HEK293 (cell line): ENCODE measurements at regions of chr14 and their contacts with region 1.

Region 1: DNA sequence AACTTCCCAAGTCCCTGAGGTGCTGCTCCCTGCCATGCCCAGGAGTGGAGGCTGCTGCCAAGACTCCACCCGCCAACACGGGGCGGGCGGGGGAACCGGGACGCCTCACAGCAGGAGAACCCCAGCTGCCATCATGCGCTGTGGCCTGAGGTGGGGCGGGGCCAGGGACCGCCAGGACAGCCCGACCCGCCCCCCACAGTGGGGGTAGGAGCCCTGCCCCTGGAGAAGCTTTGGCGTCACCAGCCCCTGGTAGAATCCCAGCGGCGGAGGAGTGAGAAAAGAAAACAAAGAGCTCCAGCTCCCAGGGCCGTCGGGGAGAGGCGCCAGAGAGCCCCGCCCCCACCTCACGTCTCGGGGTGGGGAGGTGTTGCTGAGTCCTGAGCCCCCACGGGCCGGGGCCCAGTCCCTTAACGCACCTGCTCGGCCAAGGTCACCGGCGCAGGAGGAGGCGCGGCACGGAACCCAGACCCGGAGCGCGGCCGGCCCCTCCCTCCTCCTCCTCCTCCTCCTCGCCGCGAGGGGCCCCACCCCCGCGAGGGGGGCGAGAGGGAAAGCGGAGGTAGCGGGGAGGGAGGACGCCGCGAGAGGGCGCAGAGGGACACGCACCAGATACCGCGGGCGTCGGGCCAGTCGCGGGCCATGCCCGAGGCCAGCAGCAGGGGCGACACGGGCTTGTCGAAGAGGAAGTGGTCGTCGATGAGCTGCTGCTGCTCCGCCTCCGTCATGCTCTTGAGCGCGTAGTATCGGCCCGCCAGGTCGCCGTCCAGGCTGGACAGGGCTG is 1.8 kb downstream of the CKB start:
- H3K4me3 ChIP-seq: peak overlapping the region; percentile 82
- H3K27ac ChIP-seq: peak overlapping the region; percentile 99
- H3K4me1 ChIP-seq: peaks cover 21% of the 10 kb centered on the region
- CTCF ChIP-seq: peak; percentile 100

Region 2: GRCh38 chr14:103500148-103500990 is 20.5 kb before region 1 on chr14:
- CTCF ChIA-PET with region 1: interaction called, 15 read pairs
- POLR2A ChIA-PET with region 1: no interaction called
- H3K4me3 ChIP-seq: no peak overlapping the region
- H3K27ac ChIP-seq: no peak overlapping the region
- H3K4me1 ChIP-seq: no peaks in the 10 kb centered on the region
- CTCF ChIP-seq: peak; percentile 81

Region 3: DNA sequence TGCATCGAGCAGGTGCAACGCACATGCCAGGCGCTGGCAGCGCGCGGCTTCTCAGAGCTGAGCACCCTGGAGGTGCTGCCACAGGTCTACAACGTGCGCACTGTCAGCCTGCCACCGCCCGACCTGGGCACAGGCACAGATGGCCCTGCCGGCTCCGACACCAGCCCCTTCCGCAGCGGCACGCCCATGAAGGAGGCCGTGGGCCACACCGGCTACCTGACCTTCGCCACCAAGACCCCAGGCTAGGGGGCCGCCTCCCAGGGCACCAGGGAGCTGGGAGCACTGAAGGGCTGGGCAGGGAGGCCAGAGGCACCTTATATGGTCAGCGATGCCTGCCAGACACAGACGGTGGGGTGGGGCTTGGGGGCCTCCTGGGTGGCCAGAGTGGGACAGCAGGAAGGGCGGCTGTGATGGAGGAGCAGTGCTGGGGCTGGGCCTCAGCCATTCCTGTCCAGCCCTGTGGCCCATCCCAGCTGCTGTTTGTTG is 13.8 kb after region 1 on chr14:
- CTCF ChIA-PET with region 1: interaction called, 13 read pairs
- POLR2A ChIA-PET with region 1: interaction called, 24 read pairs
- H3K4me3 ChIP-seq: no peak overlapping the region
- H3K27ac ChIP-seq: no peak overlapping the region
- H3K4me1 ChIP-seq: peaks cover 3% of the 10 kb centered on the region; the same call in 1 of the 2 replicates
- CTCF ChIP-seq: no peak

Region 4: DNA sequence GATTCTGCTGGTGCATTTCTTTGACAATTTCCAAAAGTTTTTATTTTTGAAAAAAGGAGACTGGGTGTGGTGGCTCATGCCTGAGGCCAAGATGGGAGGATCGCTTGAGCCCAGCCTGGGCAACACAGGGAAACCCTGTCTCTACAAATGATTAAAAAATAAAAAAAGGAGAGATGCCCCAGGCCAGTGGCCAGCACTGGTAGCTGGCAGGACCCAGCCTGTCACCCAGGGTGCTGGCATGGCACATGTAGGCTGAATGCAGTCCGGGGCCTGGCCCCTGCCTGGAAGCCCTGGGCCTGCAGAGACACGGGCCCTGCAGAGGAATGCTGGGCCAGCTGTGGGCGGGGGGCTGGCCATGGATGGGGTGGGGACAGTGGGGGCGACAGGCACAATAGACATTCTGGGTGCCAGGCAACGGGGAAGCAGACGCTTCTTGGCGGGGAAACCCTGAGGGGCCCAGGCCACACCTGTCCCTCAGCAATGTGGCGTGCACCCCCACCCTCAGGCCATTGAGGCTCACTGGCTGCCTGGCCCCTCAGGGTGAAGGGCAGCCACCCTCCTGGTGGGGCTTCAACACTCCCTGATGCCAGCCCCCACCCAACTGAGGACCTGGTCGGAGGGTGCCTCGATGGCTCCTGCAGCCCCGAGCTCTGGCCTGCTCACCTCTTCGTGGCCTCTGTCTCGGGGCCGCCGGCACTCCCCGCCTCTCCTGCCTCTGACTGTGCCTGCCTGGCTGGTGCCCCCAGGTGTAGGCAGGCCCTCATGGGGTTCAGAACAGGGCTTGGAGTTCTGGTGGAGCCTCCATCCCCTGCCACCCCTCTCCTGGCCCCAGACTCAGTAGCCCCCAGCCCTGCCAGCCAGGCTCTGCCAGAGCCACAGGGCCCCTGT is 20.2 kb after region 1 on chr14:
- CTCF ChIA-PET with region 1: interaction called, 48 read pairs
- POLR2A ChIA-PET with region 1: interaction called, 24 read pairs
- H3K4me3 ChIP-seq: no peak overlapping the region
- H3K27ac ChIP-seq: 0 out of 2 replicates have a peak overlapping the region, but pooled peaks have one; percentile 9
- H3K4me1 ChIP-seq: 0 out of 2 replicates have a peak, but pooled peaks cover 5% of the 10 kb centered on the region
- CTCF ChIP-seq: no peak

Region 5: DNA sequence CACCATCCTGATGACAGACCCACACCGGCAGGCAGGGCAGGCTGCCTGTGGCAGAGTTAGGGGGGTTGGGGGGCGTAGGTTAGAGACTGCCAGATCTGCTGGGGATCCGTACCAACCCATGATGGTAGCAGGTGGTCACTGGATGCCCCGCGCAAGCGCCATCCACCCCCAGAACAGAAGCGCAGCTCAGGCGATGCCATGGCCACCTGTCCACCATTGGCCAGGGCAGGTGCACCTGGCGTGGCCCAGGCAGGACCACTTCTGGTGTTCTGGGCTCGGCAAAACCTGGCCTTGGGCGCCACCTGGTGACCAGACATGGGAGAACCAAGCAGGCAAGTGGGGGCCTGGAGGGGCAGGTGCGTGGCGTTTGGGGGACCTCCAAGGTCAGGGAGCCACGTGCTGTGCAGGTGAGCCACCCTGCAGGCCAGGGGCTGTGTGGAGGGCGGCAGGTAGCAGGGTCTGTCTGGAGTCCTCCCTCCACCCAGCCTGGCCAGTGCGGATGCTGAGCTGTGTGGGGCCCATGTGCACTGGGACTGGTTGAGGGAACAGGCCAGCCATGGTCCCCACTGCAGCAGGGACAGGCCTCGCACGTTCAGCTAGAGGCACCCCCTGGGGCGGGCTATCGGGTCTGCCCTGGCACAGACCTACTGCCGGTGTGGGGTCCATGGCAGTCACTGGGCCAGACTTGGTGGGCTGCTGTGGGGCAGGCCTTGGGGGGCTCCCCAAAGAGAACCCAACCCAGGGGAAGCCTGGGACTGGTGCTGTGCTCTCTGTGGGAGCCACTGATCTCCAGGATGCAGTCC is 26.0 kb after region 1 on chr14:
- CTCF ChIA-PET with region 1: interaction called, 48 read pairs
- POLR2A ChIA-PET with region 1: interaction called, 24 read pairs
- H3K4me3 ChIP-seq: no peak overlapping the region
- H3K27ac ChIP-seq: no peak overlapping the region
- H3K4me1 ChIP-seq: no peaks in the 10 kb centered on the region; the same call in 1 of the 2 replicates
- CTCF ChIP-seq: peak; percentile 99

Region 6: DNA sequence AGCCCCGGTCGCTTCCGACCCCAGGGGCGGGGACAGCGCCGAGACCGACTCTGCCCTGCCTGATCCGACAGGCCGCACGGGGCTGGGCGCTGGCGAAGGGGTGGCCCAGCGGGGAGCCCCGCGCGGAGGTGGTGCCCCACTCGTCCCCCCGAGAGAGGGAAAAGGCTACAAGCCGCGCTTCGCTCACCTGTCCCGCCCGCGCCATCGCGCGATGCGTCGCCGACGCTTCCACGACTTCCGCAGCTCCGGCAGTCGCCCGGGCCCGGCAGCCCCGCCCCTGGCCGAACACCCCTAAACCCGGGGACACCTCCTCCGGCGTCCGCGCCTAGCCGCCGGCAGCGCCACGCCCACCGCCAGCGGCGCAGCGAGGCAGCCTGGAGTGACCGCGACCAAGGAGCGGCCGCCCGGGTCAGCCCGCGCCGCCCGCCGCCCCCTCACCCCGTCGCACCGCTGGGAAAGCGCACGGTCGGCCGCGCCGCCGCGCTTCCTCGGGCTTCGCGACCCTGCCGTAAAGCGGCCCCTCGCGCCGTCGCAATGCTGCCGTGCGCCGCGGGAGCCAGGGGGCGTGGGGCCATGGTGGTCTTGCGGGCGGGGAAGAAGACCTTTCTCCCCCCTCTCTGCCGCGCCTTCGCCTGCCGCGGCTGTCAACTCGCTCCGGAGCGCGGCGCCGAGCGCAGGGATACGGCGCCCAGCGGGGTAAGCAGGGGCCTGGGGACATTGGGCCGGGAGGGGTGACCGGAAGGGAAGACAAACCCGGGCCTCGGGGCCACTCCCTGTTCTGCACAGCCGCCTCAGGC is 41.8 kb after region 1 on chr14 and contains the starts of genes BAG5 and COA8:
- CTCF ChIA-PET with region 1: interaction called, 6 read pairs
- POLR2A ChIA-PET with region 1: interaction called, 18 read pairs
- H3K4me3 ChIP-seq: peak within 1 kb of the TSS; percentile 100
- H3K27ac ChIP-seq: peak within 1 kb of the TSS; percentile 96
- H3K4me1 ChIP-seq: peaks cover 31% of the 10 kb centered on the region
- CTCF ChIP-seq: peak; percentile 19; the same call in 1 of the 2 replicates

Region 7: GRCh38 chr14:104001003-104001402 is 480.2 kb after region 1 on chr14:
- CTCF ChIA-PET with region 1: no interaction called
- POLR2A ChIA-PET with region 1: no interaction called
- H3K4me3 ChIP-seq: no peak overlapping the region
- H3K27ac ChIP-seq: no peak overlapping the region
- H3K4me1 ChIP-seq: no peaks in the 10 kb centered on the region
- CTCF ChIP-seq: no peak